IMR-90 (cell line): ENCODE measurements at regions of chr5 and their contacts with region 1.

Region 1: DNA sequence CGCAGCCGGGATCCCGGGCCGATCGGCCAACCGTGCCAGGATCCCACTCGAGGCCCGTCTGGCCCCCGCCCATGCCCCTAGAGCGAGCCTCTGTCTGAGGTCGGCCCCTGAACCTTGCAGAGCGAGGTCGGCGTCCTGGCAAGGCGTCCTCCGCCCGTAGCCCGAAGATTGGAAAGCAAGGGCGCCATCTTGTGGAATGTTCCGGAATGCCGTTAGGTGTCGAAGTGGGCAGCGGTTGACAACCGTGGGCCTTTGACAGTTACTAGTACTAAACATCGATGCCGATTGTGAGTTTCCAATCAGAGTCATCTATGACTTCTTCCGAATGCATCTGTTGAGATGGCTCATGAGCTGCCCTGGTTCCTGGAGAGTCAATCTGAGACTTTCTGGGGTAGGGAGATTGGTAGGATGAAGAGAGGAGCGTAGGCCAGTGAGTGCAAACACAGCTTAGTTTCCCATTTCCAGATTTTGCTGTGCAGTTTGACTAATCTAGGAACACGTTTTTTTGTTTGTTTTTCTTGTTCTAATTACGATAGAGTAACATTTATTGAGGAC is 923 bp upstream of the PLK2 start:
- DNase-seq: peak; percentile 80
- ATAC-seq: peak; percentile 65
- H3K4me3 ChIP-seq: peak overlapping the region; percentile 85
- H3K27ac ChIP-seq: peak overlapping the region; percentile 77
- H3K4me1 ChIP-seq: no peaks in the 10 kb centered on the region; the same call in none of the 2 replicates
- H3K27me3 ChIP-seq: no peaks in the 10 kb centered on the region
- CTCF ChIP-seq: peak; percentile 88
- POLR2A ChIP-seq: no peak
- RAD21 ChIP-seq: peak; percentile 96

Region 2: DNA sequence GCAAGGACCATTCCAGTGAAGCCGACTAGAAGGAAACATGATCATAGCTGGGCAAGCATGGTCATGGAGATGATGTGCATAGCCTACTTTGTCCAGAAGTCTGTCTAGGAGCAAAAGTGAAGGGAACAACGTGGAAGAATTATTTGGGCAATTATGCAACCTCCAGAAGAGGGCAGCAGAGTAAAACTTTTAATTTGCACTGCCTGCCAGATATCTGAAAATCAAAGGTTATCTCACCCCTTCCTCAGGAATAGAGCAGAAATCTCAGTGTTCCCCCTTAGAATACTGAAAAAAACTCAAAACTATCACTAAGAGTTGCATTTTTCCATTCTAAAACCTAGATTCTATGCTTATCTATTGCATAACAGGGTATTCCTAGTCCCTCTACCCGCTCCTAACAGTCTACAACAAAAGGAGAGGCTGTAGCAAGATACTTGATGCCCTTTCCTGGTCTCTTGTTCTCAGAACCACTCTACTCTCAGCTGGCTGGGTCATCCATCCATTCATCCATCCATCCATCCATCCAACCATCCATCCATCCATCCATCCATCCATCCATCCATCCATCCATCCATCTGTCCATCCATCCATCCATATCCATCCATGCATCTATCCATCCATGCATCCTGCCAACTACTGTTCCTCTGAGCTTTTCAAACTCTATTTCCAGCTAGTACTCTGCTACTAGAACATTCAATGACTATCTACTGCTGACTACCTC is 1559.8 kb before region 1 on chr5:
- CTCF ChIA-PET with region 1: no interaction called
- POLR2A ChIA-PET with region 1: no interaction called
- dilution Hi-C with region 1: no loop called
- in situ Hi-C with region 1: loop called (anchors 25 kb)
- intact Hi-C with region 1: loop called (anchors 5 kb)
- DNase-seq: peak; percentile 38
- ATAC-seq: peak; percentile 84
- H3K4me3 ChIP-seq: no peak overlapping the region
- H3K27ac ChIP-seq: no peak overlapping the region
- H3K4me1 ChIP-seq: no peaks in the 10 kb centered on the region; the same call in 1 of the 2 replicates
- H3K27me3 ChIP-seq: no peaks in the 10 kb centered on the region; the same call in 1 of the 2 replicates
- CTCF ChIP-seq: peak; percentile 78
- POLR2A ChIP-seq: no peak
- RAD21 ChIP-seq: peak; percentile 72

Region 3: GRCh38 chr5:57316798-57317327 is 1143.9 kb before region 1 on chr5:
- CTCF ChIA-PET with region 1: interaction called, 3 read pairs
- POLR2A ChIA-PET with region 1: interaction called, 12 read pairs
- dilution Hi-C with region 1: no loop called
- in situ Hi-C with region 1: no loop called
- intact Hi-C with region 1: no loop called
- DNase-seq: peak; percentile 100
- ATAC-seq: peak; percentile 97
- H3K4me3 ChIP-seq: peak overlapping the region; percentile 11; the same call in 1 of the 2 replicates
- H3K27ac ChIP-seq: peak overlapping the region; percentile 86; the same call in 1 of the 2 replicates
- H3K4me1 ChIP-seq: peaks cover 19% of the 10 kb centered on the region
- H3K27me3 ChIP-seq: no peaks in the 10 kb centered on the region
- CTCF ChIP-seq: no peak
- POLR2A ChIP-seq: no peak
- RAD21 ChIP-seq: no peak; the same call in 1 of the 2 replicates

Region 4: DNA sequence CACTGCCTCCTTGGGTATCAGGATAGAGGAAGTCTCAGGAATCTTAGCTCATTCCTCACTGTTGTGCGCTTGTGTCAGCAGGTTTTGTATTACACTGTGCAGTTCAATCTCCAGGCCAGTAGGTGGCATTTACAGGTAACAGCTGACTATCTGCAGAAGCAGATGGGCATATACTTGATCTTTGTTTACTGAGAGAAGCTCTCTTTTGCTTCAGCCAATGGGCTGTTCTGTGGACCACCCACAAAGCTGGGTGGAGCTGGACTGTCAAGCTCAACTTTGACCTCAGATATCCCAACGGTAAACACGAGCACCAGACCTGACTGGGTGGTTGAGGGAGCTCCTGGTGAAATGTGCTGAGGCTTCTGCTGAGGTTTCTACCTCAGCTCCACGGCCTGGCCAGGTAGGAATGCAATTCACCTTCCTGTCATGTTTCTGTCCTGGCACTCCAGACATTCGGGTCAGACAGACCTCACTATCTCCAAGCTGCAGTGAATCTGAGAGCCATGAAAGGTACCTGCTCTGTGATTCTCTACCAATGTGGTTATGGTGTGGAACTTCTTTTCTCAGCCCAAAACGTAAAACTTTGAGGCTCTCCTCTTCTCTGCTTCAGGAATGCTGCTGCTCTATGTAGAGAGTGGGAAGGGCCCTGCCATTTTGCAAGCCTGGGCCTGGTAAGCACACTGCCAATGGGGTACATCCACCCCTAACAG is 810.3 kb before region 1 on chr5:
- CTCF ChIA-PET with region 1: no interaction called
- POLR2A ChIA-PET with region 1: interaction called, 4 read pairs
- dilution Hi-C with region 1: no loop called
- in situ Hi-C with region 1: no loop called
- intact Hi-C with region 1: loop called (anchors 5 kb)
- DNase-seq: peak; percentile 53
- ATAC-seq: peak; percentile 86
- H3K4me3 ChIP-seq: no peak overlapping the region
- H3K27ac ChIP-seq: no peak overlapping the region
- H3K4me1 ChIP-seq: no peaks in the 10 kb centered on the region
- H3K27me3 ChIP-seq: no peaks in the 10 kb centered on the region
- CTCF ChIP-seq: peak; percentile 55
- POLR2A ChIP-seq: no peak
- RAD21 ChIP-seq: peak; percentile 66

Region 5: GRCh38 chr5:57887851-57888621 is 572.8 kb before region 1 on chr5:
- CTCF ChIA-PET with region 1: interaction called, 12 read pairs
- POLR2A ChIA-PET with region 1: interaction called, 5 read pairs
- dilution Hi-C with region 1: no loop called
- in situ Hi-C with region 1: no loop called
- intact Hi-C with region 1: loop called (anchors 1 kb)
- DNase-seq: peak; percentile 69
- ATAC-seq: peak; percentile 83
- H3K4me3 ChIP-seq: no peak overlapping the region
- H3K27ac ChIP-seq: no peak overlapping the region
- H3K4me1 ChIP-seq: peaks cover 7% of the 10 kb centered on the region
- H3K27me3 ChIP-seq: no peaks in the 10 kb centered on the region
- CTCF ChIP-seq: peak; percentile 63
- POLR2A ChIP-seq: no peak
- RAD21 ChIP-seq: peak; percentile 80

Region 6: DNA sequence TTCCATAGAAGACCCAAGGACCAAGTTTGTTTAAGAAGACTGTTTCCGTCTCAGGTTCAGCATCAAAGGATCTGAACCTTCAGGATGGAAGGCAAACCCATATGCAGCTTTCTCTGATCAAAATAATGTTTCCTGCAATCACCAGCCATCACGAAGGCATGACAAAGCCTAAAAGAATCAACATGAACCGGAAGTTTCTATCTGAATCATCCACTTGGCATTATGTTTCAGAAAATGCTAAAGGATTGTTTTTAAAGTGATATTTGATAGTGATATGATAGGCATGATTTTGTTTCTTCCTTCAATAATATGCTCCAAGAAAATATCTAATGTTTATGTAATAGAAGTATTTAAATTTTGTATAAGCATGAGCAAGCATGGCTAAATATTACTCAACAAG is 220.5 kb before region 1 on chr5:
- CTCF ChIA-PET with region 1: interaction called, 3 read pairs
- POLR2A ChIA-PET with region 1: no interaction called
- dilution Hi-C with region 1: no loop called
- in situ Hi-C with region 1: no loop called
- intact Hi-C with region 1: loop called (anchors 5 kb)
- DNase-seq: peak; percentile 87
- ATAC-seq: peak; percentile 81
- H3K4me3 ChIP-seq: no peak overlapping the region
- H3K27ac ChIP-seq: peak overlapping the region; percentile 50; the same call in 1 of the 2 replicates
- H3K4me1 ChIP-seq: peaks cover 4% of the 10 kb centered on the region
- H3K27me3 ChIP-seq: no peaks in the 10 kb centered on the region
- CTCF ChIP-seq: no peak
- POLR2A ChIP-seq: no peak
- RAD21 ChIP-seq: 0 out of 2 replicates have a peak, but pooled peaks have one; percentile 7